Activated T-helper 2 cell treated with anti-CD3 and anti-CD28 coated beads, Interferon-gamma antibody, Interleukin-2, Interleukin-4, amounts not matched to agents 10 μg/mL and 5 μg/mL and 100 μg/mL, durations not matched to agents 14 hours and 24 hours and 36 hours (primary cell): ENCODE measurements at regions of chr13 and their contacts with region 1.

Region 1: GRCh38 chr13:45340926-45341750 is at the start of gene TPT1:
- DNase-seq: peak; percentile 99
- H3K4me3 Mint-ChIP-seq: peak within 1 kb of the TSS; percentile 99
- H3K27ac Mint-ChIP-seq: peak within 1 kb of the TSS; percentile 99
- H3K4me1 Mint-ChIP-seq: peaks cover 41% of the 10 kb centered on the region
- H3K27me3 Mint-ChIP-seq: no peaks in the 10 kb centered on the region
- total RNA-seq, gene TPT1: 2,606 and 2,653 TPM in 2 replicates

Region 2: GRCh38 chr13:45119991-45120864 is 220.9 kb before region 1 on chr13 and contains the start of gene GTF2F2:
- intact Hi-C with region 1: loop called (anchors 2 kb)
- DNase-seq: peak; percentile 84
- H3K4me3 Mint-ChIP-seq: no peak within 1 kb of the TSS
- H3K27ac Mint-ChIP-seq: no peak within 1 kb of the TSS
- H3K4me1 Mint-ChIP-seq: peaks cover 8% of the 10 kb centered on the region
- H3K27me3 Mint-ChIP-seq: no peaks in the 10 kb centered on the region
- total RNA-seq, gene GTF2F2: 26.9 and 28.9 TPM in 2 replicates

Region 3: GRCh38 chr13:45367358-45367757 is 26.2 kb after region 1 on chr13:
- intact Hi-C with region 1: loop called (anchors 1 kb)
- DNase-seq: peak; percentile 87
- H3K4me3 Mint-ChIP-seq: peak overlapping the region; percentile 41
- H3K27ac Mint-ChIP-seq: peak overlapping the region; percentile 87
- H3K4me1 Mint-ChIP-seq: peaks cover 40% of the 10 kb centered on the region
- H3K27me3 Mint-ChIP-seq: no peaks in the 10 kb centered on the region

Region 4: GRCh38 chr13:45417790-45418534 is 76.8 kb after region 1 on chr13 and contains the start of gene SLC25A30:
- intact Hi-C with region 1: loop called (anchors 1 kb)
- DNase-seq: peak; percentile 82
- H3K4me3 Mint-ChIP-seq: peak within 1 kb of the TSS; percentile 88
- H3K27ac Mint-ChIP-seq: peak within 1 kb of the TSS; percentile 87
- H3K4me1 Mint-ChIP-seq: peaks cover 12% of the 10 kb centered on the region
- H3K27me3 Mint-ChIP-seq: no peaks in the 10 kb centered on the region
- total RNA-seq, gene SLC25A30: 12.2 and 13.6 TPM in 2 replicates

Region 5: GRCh38 chr13:46168341-46168740 is 827.2 kb after region 1 on chr13:
- intact Hi-C with region 1: loop called (anchors 5 kb)
- DNase-seq: no peak
- H3K4me3 Mint-ChIP-seq: peak overlapping the region; percentile 69
- H3K27ac Mint-ChIP-seq: peak overlapping the region; percentile 94
- H3K4me1 Mint-ChIP-seq: peaks cover 90% of the 10 kb centered on the region
- H3K27me3 Mint-ChIP-seq: no peaks in the 10 kb centered on the region